ENCODE measurements at regions of chr18 and their contacts with region 1.

Region 1: GRCh38 chr18:22465859-22466457 is 48.2 kb upstream of the CTAGE1 start:
- DNase-seq: peak in 1 of 3 donors; percentile 52
- ATAC-seq: peak; percentile 86 to 88
- H3K4me3 ChIP-seq: no peak overlapping the region
- H3K27ac ChIP-seq: peak overlapping the region; percentile 85
- H3K4me1 ChIP-seq: peaks cover 10% of the 10 kb centered on the region
- H3K27me3 ChIP-seq: no peaks in the 10 kb centered on the region

Region 2: DNA sequence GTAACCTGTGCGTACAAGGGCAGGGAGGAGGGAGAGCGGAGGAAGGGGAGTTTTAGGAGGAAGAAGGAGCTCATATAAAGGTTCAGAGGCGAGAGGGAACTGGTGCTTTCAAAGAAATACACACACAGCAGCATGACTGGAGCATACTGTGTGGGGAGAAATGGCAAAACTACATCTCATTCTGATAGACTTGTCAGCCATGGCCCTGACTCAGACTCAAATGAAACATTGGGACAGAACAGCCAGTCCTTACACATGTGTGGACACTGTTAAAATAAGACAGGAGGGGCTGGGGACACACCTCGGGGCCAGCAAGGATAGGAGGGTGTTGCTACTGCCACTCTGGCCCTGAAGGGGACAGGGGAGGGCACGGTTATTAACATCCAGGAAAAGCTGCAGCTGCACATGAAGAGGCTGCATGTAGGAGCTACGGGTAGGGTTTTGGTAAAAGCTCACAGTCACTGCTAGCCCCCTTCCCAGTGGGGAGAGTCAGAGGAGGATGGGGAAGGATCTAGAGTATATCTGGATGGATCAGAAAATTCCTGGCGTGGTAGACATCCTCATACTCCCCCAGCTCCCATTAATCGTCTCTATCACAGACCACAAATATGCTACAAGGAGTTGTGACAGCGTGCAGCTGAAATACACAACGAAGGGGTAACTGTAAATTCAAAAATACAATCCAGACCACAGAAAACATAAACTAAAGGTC is 186.1 kb before region 1 on chr18:
- intact Hi-C with region 1: loop called in 1 of 4 experiments (anchors 10 kb)
- DNase-seq: peak in 2 of 3 donors; percentile 54 to 67
- ATAC-seq: peak; percentile 21 to 54
- H3K4me3 ChIP-seq: no peak overlapping the region
- H3K27ac ChIP-seq: peak overlapping the region; percentile 97
- H3K4me1 ChIP-seq: peaks cover 5% of the 10 kb centered on the region
- H3K27me3 ChIP-seq: no peaks in the 10 kb centered on the region

Region 3: GRCh38 chr18:22363867-22364463 is 102.0 kb before region 1 on chr18:
- intact Hi-C with region 1: loop called in 1 of 4 experiments (anchors 10 kb)
- DNase-seq: no peak
- ATAC-seq: peak; percentile 57 to 71
- H3K4me3 ChIP-seq: no peak overlapping the region
- H3K27ac ChIP-seq: no peak overlapping the region
- H3K4me1 ChIP-seq: no peaks in the 10 kb centered on the region
- H3K27me3 ChIP-seq: no peaks in the 10 kb centered on the region

Region 4: GRCh38 chr18:22579271-22579670 is 113.3 kb after region 1 on chr18:
- intact Hi-C with region 1: no loop called
- DNase-seq: no peak
- ATAC-seq: no peak
- H3K4me3 ChIP-seq: no peak overlapping the region
- H3K27ac ChIP-seq: no peak overlapping the region
- H3K4me1 ChIP-seq: no peaks in the 10 kb centered on the region
- H3K27me3 ChIP-seq: no peaks in the 10 kb centered on the region